ENCODE measurements at regions of chr6 and their contacts with region 1.

Region 1: DNA sequence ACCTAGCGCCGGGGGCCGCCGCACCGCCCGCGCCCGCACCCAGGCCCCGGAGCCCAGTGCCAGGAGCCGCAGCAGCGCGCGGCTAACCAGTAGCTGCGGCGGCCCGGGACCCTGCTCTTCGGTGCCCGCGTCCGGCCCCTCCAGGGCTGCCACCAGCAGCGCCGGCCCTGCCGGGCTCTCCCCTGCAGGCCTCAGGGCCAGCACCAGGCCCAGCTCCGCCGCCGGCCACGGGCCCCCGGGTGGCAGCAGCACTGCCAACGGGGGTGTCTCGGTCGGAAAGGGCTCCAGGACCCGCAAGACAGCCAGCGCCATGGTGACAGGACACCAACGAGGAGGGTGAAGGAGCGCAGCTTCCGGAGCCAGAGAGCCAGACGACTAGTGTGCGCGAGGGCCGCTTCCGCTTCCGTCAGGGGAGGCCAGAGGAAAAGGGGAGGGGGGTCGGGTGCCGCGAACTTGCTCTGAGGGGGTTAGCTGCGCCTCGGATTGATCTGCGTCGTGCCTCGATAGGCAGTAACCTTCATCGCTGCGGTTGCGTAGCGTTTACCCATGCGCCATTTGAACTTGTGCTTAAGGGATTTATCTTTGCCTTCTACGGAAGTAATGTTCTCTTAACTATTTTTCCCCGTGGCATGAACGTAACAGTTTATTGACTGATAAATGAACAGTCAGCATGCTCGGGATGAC is at the start of gene PEX6:
- DNase-seq: peak; percentile 72 to 81
- H3K4me3 ChIP-seq: peak within 1 kb of the TSS; percentile 87
- H3K27ac ChIP-seq: peak within 1 kb of the TSS; percentile 30
- H3K4me1 ChIP-seq: 0 out of 2 replicates have a peak, but pooled peaks cover 26% of the 10 kb centered on the region
- H3K27me3 ChIP-seq: no peaks in the 10 kb centered on the region
- CTCF ChIP-seq: no peak
- total RNA-seq, gene PEX6: 25.9 and 31.3 TPM in 2 replicates

Region 2: GRCh38 chr6:41618091-41618490 is 1360.9 kb before region 1 on chr6:
- CTCF ChIA-PET with region 1: no interaction called
- POLR2A ChIA-PET with region 1: no interaction called
- intact Hi-C with region 1: no loop called
- DNase-seq: no peak
- H3K4me3 ChIP-seq: no peak overlapping the region
- H3K27ac ChIP-seq: no peak overlapping the region
- H3K4me1 ChIP-seq: peaks cover 17% of the 10 kb centered on the region
- H3K27me3 ChIP-seq: no peaks in the 10 kb centered on the region
- CTCF ChIP-seq: no peak

Region 3: GRCh38 chr6:41840326-41840725 is 1138.7 kb before region 1 on chr6:
- CTCF ChIA-PET with region 1: no interaction called
- POLR2A ChIA-PET with region 1: interaction called, 15 read pairs
- intact Hi-C with region 1: no loop called
- DNase-seq: no peak
- H3K4me3 ChIP-seq: no peak overlapping the region
- H3K27ac ChIP-seq: no peak overlapping the region
- H3K4me1 ChIP-seq: no peaks in the 10 kb centered on the region
- H3K27me3 ChIP-seq: no peaks in the 10 kb centered on the region
- CTCF ChIP-seq: no peak

Region 4: DNA sequence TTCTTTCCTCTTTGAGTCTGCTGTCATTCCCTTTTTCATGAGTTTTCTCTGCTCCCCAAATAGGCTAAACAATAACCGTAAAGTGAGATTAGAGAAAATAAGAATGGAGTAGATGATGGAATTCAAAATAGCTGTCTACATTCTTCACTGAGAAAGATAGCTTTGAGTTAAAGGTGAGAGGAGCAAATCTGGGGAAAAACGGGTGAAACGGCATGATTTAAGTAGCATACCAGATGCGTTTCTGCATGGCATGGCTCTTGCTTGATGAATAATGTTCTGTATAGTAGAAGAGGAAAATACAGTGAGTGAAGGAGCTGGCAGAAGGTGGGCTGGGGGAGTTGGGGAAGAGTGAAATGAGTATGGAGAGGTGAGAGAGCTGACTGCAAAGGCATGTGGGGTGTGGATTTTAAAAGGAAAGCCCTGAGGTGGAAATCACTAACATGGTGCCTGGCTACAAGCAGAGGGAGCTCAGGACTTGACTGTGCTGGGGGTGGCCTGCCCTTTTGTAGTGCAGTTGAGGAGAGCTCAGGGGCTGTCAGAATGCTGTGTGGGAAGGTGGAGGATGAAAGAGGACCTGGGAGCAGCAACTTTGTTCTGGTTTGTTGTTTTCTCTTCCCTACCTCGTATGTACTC is 188.3 kb before region 1 on chr6:
- CTCF ChIA-PET with region 1: no interaction called
- POLR2A ChIA-PET with region 1: no interaction called
- intact Hi-C with region 1: no loop called
- DNase-seq: no peak
- H3K4me3 ChIP-seq: no peak overlapping the region
- H3K27ac ChIP-seq: no peak overlapping the region
- H3K4me1 ChIP-seq: no peaks in the 10 kb centered on the region
- H3K27me3 ChIP-seq: no peaks in the 10 kb centered on the region
- CTCF ChIP-seq: no peak

Region 5: DNA sequence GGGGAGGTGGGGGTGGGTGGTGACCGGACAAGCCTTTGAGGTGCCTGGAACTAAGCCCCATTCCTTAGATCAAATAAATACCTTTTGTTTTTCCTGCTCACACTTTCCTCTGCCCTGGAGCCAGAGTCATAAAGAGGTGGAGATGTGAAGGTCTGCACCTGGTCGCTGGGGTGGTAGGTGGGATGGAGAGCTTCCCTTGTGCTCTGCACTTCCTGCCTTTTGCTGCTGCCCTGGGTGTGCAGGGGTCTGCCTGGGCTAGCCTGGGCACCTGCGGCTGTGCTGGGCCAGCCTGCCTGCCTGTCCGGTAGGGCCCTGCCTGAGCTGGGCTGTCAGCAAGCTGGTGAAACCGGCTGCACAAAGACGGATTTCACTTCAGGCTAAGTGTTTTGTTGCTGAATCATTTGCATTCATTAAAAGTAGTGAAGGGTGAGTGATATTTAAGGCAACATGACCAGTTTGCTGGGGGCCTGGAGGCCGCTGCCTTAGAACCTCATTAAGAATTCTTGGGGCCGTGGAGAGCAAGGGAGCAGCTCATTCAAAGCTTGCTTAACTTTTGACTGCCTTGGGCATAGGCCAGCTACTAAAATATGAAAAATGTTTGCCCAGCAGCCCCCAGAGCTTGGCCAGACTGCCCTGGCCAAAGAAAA is 117.6 kb after region 1 on chr6:
- CTCF ChIA-PET with region 1: interaction called, 16 read pairs
- POLR2A ChIA-PET with region 1: no interaction called
- intact Hi-C with region 1: no loop called
- DNase-seq: peak; percentile 89 to 98
- H3K4me3 ChIP-seq: peak overlapping the region; percentile 47; the same call in 1 of the 2 replicates
- H3K27ac ChIP-seq: peak overlapping the region; percentile 89
- H3K4me1 ChIP-seq: peaks cover 60% of the 10 kb centered on the region
- H3K27me3 ChIP-seq: no peaks in the 10 kb centered on the region
- CTCF ChIP-seq: no peak; the same call in 1 of the 2 replicates

Region 6: DNA sequence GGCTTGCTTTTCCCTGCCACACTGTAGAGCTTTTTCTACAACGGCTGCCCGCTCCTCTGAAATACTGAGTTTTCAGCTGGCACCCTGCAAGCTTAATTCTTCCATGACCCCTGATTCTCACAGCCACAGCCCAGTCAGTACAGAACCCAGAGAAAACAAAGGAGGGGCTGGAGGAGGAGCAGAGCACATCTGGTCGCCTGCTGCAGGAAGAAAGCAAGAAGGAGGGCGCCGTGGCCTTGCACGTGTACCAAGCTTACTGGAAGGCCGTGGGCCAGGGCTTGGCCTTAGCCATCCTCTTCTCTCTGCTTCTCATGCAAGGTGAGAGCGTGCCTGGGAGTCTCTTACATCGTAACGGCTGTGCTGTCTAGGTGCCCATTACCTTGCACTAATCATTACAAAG is 465.1 kb after region 1 on chr6:
- CTCF ChIA-PET with region 1: no interaction called
- POLR2A ChIA-PET with region 1: no interaction called
- intact Hi-C with region 1: no loop called
- DNase-seq: no peak
- H3K4me3 ChIP-seq: no peak overlapping the region
- H3K27ac ChIP-seq: no peak overlapping the region
- H3K4me1 ChIP-seq: no peaks in the 10 kb centered on the region
- H3K27me3 ChIP-seq: no peaks in the 10 kb centered on the region
- CTCF ChIP-seq: no peak

Region 7: DNA sequence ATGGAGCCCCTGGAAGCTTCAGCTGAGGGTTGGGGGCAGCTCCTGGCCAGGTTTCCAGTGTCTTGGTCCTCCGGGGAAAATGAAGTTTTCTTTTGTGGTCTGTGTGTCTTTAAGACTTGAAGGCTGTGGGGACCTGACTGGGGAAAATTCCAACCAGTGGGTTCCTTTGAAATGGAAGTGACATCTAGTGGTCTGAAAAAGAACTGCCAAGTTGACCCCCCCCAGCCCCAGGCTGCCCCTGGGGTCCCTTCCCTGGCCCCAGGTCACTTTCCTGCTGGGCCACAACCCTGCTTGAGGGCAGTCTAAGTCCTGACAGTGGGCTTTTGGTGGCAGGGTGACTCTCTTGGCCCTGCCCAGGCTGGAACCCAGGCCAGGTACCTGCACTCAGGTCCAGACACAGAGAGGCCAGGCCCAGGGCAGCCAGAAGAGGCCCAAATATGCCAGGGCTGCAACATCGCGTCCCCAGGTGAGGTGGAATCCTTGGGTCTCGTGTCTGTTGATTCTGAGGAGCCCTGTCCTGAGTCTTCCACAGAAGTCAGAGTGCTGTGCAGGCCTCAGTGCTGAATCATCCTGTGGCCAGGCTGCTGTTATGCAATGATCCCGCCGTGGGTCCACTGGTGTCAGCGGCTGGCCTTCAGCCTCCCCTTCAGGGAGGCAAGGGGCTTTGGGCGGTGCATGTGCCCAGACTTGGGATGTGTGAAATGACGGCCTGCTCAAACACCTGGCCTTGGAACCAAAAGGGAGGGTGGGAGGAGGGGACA is 859.5 kb after region 1 on chr6:
- CTCF ChIA-PET with region 1: no interaction called
- POLR2A ChIA-PET with region 1: no interaction called
- intact Hi-C with region 1: no loop called
- DNase-seq: peak; percentile 39 to 57
- H3K4me3 ChIP-seq: no peak overlapping the region; the same call in 1 of the 2 replicates
- H3K27ac ChIP-seq: peak overlapping the region; percentile 73
- H3K4me1 ChIP-seq: peaks cover 36% of the 10 kb centered on the region
- H3K27me3 ChIP-seq: no peaks in the 10 kb centered on the region
- CTCF ChIP-seq: peak; percentile 85